ENCODE measurements at regions of chr1 and their contacts with region 1.

Region 1: DNA sequence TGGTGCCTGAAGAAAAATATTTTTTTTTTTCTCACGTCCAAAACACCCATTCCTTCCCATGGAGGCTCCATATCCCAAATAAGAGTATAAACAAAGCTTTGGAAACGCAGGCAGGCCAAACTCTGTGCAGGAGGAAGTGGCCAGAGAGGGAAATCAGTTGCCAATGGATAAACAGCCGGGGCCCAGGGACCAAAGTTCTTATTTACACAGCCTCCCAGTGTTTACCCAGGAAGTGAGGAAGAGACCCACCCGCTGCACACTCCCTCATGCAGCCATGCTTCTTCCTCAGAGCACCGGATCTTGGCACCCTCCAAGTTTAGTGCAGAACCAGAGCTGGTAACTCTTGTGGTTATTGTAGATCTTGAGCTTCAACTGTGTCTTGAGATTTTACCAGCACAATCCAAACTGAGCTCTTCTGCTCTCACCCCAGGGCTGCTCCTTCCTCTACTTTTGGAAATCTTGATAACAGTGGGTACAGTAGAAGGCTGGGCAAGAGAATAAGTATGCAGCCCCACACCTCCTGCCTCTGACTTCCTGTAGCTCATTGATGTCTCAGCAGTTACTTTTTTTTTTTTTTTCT is 14.2 kb downstream of the MARCKSL1 start:
- DNase-seq: no peak
- H3K4me3 ChIP-seq: no peak overlapping the region
- CTCF ChIP-seq: no peak

Region 2: GRCh38 chr1:32307323-32307722 is 14.5 kb before region 1 on chr1:
- CTCF ChIA-PET with region 1: interaction called, 14 read pairs
- POLR2A ChIA-PET with region 1: no interaction called
- DNase-seq: no peak
- H3K4me3 ChIP-seq: no peak overlapping the region
- CTCF ChIP-seq: no peak